ENCODE measurements at regions of chr18 and their contacts with region 1.

Region 1: GRCh38 chr18:24488824-24489493 is 28.5 kb downstream of the HRH4 start:
- DNase-seq: no peak
- H3K4me3 ChIP-seq: no peak overlapping the region
- H3K27ac ChIP-seq: no peak overlapping the region
- H3K4me1 ChIP-seq: no peaks in the 10 kb centered on the region
- H3K27me3 ChIP-seq: no peaks in the 10 kb centered on the region
- CTCF ChIP-seq: peak; percentile 27 to 76 (median 66)
- EP300 ChIP-seq: no peak
- POLR2A ChIP-seq: no peak

Region 2: GRCh38 chr18:24176727-24177416 is 312.1 kb before region 1 on chr18:
- intact Hi-C with region 1: loop called (anchors 2 kb)
- DNase-seq: peak; percentile 83
- H3K4me3 ChIP-seq: no peak overlapping the region
- H3K27ac ChIP-seq: no peak overlapping the region
- H3K4me1 ChIP-seq: peaks cover 0 to 7% (median 0%) of the 10 kb centered on the region in 4 donors
- H3K27me3 ChIP-seq: no peaks in the 10 kb centered on the region
- CTCF ChIP-seq: peak; percentile 57 to 76 (median 61)
- EP300 ChIP-seq: no peak
- POLR2A ChIP-seq: no peak

Region 3: GRCh38 chr18:24362758-24363157 is 126.2 kb before region 1 on chr18:
- intact Hi-C with region 1: loop called (anchors 2 kb)
- DNase-seq: no peak
- H3K4me3 ChIP-seq: no peak overlapping the region
- H3K27ac ChIP-seq: no peak overlapping the region
- H3K4me1 ChIP-seq: no peaks in the 10 kb centered on the region
- H3K27me3 ChIP-seq: no peaks in the 10 kb centered on the region
- CTCF ChIP-seq: no peak
- EP300 ChIP-seq: no peak
- POLR2A ChIP-seq: no peak

Region 4: GRCh38 chr18:24436939-24437338 is 52.0 kb before region 1 on chr18:
- intact Hi-C with region 1: loop called (anchors 5 kb)
- DNase-seq: no peak
- H3K4me3 ChIP-seq: no peak overlapping the region
- H3K27ac ChIP-seq: no peak overlapping the region
- H3K4me1 ChIP-seq: no peaks in the 10 kb centered on the region
- H3K27me3 ChIP-seq: no peaks in the 10 kb centered on the region
- CTCF ChIP-seq: no peak
- EP300 ChIP-seq: no peak
- POLR2A ChIP-seq: no peak

Region 5: DNA sequence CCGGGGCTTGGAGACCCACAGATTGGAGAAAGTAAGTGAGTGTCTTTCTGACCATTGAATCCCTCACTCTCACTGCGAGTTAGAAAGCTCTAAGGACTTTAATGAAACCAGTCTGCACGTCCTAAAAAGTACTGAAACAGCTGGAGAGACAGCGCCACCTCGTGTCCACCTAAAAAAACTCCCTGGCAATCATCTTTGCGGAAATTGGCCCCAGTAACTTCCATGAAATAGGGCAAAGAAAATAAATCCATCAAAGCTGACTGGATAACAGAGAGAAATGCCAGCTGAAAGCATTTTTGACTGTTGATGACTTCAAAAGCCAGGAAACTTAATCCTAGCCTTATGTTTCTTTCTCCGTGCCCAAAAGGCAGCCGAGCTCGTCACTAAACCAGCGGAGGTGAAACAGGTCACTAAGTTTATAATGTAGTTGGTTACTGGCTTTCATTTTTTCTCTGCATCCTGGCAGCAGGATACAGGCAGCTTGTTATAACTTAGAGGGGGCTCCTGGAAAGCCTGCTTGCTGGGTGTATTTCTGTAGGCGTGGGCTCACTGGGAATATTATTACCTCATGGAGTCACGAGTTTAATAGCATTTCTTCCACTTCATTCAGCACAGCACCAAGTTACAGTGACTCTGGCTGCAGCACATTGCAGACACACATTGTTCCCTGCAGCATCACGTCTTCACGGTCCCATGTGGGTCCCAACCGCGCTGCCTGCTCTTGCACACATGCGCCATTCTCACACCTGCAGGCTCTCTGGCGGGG is 238.0 kb after region 1 on chr18:
- intact Hi-C with region 1: loop called (anchors 2 kb)
- DNase-seq: peak; percentile 75
- H3K4me3 ChIP-seq: peak overlapping the region in 3 of 4 donors; percentile 25 to 33 (median 32)
- H3K27ac ChIP-seq: no peak overlapping the region
- H3K4me1 ChIP-seq: no peaks in the 10 kb centered on the region
- H3K27me3 ChIP-seq: no peaks in the 10 kb centered on the region
- CTCF ChIP-seq: peak; percentile 66 to 82 (median 76)
- EP300 ChIP-seq: no peak
- POLR2A ChIP-seq: no peak